Activated CD8-positive, alpha-beta T cell treated with anti-CD3 and anti-CD28 coated beads, Interleukin-2, amount 10 ng/mL, durations not matched to agents 7 days and 5 days (primary cell): ENCODE measurements at regions of chr3 and their contacts with region 1.

Region 1: DNA sequence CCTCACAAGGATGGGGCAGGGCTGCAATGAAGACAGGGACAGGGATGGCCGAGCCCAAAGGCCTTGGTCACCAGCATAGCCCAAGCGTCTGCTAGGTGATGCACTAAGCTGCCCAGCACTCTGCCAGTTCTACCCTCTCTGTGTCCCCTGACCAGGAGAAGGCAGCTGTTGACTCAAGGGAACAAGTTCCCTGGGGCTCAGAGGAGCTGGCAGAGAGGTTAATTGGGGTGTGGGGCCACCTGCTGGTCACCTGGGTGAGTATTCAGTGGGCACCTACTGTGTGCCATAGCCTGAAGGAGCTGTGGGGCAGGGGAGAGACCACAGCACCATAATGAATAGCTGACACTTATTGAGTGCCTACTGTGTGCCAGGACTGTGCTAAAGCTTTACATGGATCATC is 22.0 kb upstream of the DOCK3 start:
- DNase-seq: peak; percentile 66
- ATAC-seq: peak; percentile 72
- H3K4me3 Mint-ChIP-seq: no peak overlapping the region
- H3K27ac Mint-ChIP-seq: peak overlapping the region; percentile 21
- H3K4me1 Mint-ChIP-seq: peaks cover 23% of the 10 kb centered on the region
- H3K27me3 Mint-ChIP-seq: no peaks in the 10 kb centered on the region

Region 2: GRCh38 chr3:50519471-50520089 is 133.1 kb before region 1 on chr3:
- CTCF ChIA-PET with region 1: no interaction called
- POLR2A ChIA-PET with region 1: no interaction called
- DNase-seq: peak; percentile 85
- ATAC-seq: peak; percentile 84
- H3K4me3 Mint-ChIP-seq: no peak overlapping the region
- H3K27ac Mint-ChIP-seq: no peak overlapping the region
- H3K4me1 Mint-ChIP-seq: peaks cover 10% of the 10 kb centered on the region
- H3K27me3 Mint-ChIP-seq: peaks cover 18% of the 10 kb centered on the region

Region 3: DNA sequence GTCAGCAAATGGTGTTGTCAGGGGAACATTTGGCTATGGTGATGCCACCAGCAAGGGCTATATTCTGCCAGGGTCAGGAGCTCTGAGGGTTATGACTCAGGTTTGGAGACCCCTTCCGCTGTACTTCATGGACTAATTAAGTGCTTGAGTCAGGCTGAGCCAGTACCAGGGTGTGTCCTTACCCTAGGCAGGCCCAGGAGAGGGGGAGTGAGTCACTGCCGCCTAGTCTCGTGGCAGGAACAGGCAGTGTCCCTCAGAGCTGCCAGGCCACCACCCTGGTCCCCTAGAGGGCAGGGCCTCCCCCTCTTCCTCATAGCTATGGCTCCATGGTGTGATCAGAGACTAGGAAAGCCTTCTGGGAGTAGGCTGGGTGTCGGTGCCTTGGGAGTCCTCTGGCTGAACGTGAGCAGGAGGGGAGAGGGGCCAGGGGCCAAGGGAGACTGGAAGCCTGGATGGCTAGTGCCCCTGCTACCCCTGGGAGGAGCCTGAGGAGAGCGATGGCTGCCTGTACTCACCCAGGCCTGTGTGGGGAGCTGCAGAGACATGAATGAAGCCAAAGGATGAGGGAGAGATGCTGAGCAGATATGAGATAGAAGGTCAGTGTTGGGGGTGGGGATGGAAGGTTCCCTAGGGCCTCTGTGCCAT is 25.2 kb before region 1 on chr3:
- CTCF ChIA-PET with region 1: interaction called, 219 read pairs
- POLR2A ChIA-PET with region 1: interaction called, 3 read pairs
- DNase-seq: peak; percentile 36
- ATAC-seq: no peak
- H3K4me3 Mint-ChIP-seq: no peak overlapping the region
- H3K27ac Mint-ChIP-seq: peak overlapping the region; percentile 55
- H3K4me1 Mint-ChIP-seq: peaks cover 99% of the 10 kb centered on the region
- H3K27me3 Mint-ChIP-seq: no peaks in the 10 kb centered on the region

Region 4: GRCh38 chr3:50639055-50639494 is 13.6 kb before region 1 on chr3:
- CTCF ChIA-PET with region 1: interaction called, 30 read pairs
- POLR2A ChIA-PET with region 1: no interaction called
- DNase-seq: no peak
- ATAC-seq: no peak
- H3K4me3 Mint-ChIP-seq: no peak overlapping the region
- H3K27ac Mint-ChIP-seq: peak overlapping the region; percentile 81
- H3K4me1 Mint-ChIP-seq: peaks cover 43% of the 10 kb centered on the region
- H3K27me3 Mint-ChIP-seq: no peaks in the 10 kb centered on the region